ENCODE measurements at regions of chr15 and their contacts with region 1.

Region 1: GRCh38 chr15:58182460-58183163 is 44.4 kb downstream of the AQP9 start:
- ATAC-seq: peak; percentile 80 to 99 (median 92)
- H3K4me3 ChIP-seq: no peak overlapping the region
- H3K27ac ChIP-seq: no peak overlapping the region
- H3K4me1 ChIP-seq: peaks cover 0 to 5% of the 10 kb centered on the region in 2 donors

Region 2: DNA sequence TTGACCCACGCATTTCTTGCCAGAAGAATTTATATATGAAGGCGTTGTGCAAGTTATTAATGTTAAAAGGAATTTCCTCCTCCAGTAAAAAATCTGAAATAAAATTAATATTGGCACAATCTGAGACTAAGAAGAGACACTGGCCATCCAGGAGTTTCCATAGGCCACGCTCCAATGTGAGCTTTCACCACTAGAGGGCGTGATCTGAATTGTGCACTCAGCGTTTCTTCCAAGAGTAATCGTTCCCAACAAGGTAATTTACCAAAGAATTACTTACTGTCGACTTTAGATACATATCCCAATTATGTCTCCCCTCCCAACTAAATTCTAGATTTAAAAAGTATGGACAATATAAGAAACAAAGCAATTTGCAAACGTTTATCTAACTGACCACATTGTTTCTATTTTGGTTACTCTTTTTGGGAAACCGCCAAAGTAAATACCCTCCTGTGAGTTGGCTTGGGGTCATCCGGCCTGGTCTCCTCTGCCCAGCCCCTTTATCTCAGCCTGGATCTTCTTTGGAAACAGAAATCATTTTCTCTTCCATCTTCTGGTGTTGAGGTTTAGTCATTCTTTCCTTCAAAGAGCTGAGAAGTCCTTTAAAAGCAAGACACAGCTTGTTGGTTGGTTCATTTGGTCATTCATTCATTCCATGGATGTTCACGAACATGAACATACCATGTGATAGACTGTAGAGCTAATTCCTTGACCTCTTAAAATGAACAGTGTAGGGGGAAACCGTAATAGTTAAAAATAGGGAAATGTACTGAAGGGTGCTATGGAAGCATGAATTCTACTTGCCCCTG is 449.9 kb before region 1 on chr15:
- in situ Hi-C with region 1: loop called in 1 of 9 experiments (anchors 25 kb)
- ATAC-seq: peak in 4 of 8 experiments; percentile 37 to 76 (median 68)
- H3K4me3 ChIP-seq: no peak overlapping the region
- H3K27ac ChIP-seq: no peak overlapping the region
- H3K4me1 ChIP-seq: peaks cover 7 to 8% of the 10 kb centered on the region in 2 donors

Region 3: DNA sequence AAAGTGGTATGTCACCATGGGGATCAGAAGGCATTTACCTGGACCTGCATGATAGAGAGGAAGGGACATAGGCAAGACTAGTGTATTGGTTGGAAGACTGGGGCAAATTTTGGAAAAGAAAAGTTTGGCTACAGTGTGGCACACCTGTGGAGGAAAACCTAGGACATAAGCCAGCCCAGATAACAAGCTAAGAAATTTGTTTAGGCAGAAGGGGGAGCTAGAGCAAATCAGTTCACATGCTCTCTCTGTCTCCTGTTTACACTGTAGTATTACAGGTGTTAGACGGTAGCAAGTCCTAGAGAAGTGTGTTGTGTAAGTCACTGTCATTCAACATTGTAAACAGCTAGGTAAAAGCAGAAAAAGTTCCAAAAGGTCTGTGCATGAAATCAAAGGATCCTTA is 105.2 kb before region 1 on chr15:
- in situ Hi-C with region 1: loop called in 1 of 9 experiments (anchors 25 kb)
- ATAC-seq: no peak
- H3K4me3 ChIP-seq: no peak overlapping the region
- H3K27ac ChIP-seq: no peak overlapping the region
- H3K4me1 ChIP-seq: no peaks in the 10 kb centered on the region

Measured in motor neuron (in vitro differentiated cells).